Stomach (tissue), 19 donors: ENCODE measurements at regions of chr11 and their contacts with region 1.

Region 1: GRCh38 chr11:69874984-69875624 is 55.9 kb upstream of the FGF3 start:
- DNase-seq: no peak
- H3K4me3 ChIP-seq: no peak overlapping the region
- H3K27ac ChIP-seq: no peak overlapping the region
- H3K4me1 ChIP-seq: no peaks in the 10 kb centered on the region
- H3K27me3 ChIP-seq: peaks cover 0 to 41% (median 0%) of the 10 kb centered on the region in 3 donors
- CTCF ChIP-seq: no peak
- EP300 ChIP-seq: no peak
- POLR2A ChIP-seq: no peak

Region 2: GRCh38 chr11:69721745-69722144 is 153.4 kb before region 1 on chr11:
- intact Hi-C with region 1: loop called (anchors 10 kb)
- DNase-seq: no peak
- H3K4me3 ChIP-seq: no peak overlapping the region
- H3K27ac ChIP-seq: no peak overlapping the region
- H3K4me1 ChIP-seq: peaks cover 0 to 5% (median 0%) of the 10 kb centered on the region in 4 donors
- H3K27me3 ChIP-seq: peaks cover 10 to 90% (median 41%) of the 10 kb centered on the region in 3 donors
- CTCF ChIP-seq: no peak
- EP300 ChIP-seq: no peak
- POLR2A ChIP-seq: no peak

Region 3: DNA sequence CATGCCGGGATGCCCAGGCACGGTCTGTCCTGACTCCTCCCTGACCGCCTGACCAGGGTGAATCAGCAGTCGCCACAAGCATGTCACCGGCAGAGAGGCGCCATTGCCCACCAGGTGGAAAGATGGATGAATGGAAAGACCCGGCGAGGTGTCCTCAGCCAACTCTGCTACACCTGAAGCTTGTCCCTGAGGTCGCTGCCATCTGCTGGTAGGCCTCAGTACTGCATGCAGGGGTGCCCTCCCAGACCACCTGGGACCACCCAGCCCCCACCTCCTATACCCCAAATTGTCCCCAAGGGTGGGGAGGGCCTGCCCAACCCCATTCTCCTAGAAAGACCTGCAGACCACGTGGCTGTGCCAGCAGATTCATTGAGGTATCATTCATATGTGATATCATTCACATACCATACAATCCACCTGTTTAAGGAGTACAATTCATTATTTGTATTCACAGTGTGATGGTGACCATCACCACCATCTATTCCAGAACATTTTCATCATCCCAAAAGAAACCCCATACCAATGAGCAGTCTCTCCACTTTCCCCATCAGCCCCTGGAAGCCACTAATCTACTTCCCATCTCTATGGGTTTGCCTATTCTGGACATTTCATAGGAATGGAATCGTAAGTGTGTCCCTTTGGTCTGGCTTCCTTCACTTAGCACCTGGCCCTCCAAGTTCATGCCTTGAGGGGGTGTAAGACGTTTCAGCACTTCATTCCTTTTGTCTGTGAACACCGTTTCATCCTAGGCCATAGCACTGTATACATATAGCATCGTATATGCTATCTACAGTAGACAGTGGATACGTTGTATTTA is 73.4 kb before region 1 on chr11:
- intact Hi-C with region 1: no loop called
- DNase-seq: peak; percentile 30 to 54
- H3K4me3 ChIP-seq: no peak overlapping the region
- H3K27ac ChIP-seq: no peak overlapping the region
- H3K4me1 ChIP-seq: no peaks in the 10 kb centered on the region
- H3K27me3 ChIP-seq: peaks cover 0 to 53% (median 0%) of the 10 kb centered on the region in 3 donors
- CTCF ChIP-seq: peak in 5 of 7 experiments; percentile 44 to 73 (median 49)
- EP300 ChIP-seq: no peak
- POLR2A ChIP-seq: no peak

Region 4: DNA sequence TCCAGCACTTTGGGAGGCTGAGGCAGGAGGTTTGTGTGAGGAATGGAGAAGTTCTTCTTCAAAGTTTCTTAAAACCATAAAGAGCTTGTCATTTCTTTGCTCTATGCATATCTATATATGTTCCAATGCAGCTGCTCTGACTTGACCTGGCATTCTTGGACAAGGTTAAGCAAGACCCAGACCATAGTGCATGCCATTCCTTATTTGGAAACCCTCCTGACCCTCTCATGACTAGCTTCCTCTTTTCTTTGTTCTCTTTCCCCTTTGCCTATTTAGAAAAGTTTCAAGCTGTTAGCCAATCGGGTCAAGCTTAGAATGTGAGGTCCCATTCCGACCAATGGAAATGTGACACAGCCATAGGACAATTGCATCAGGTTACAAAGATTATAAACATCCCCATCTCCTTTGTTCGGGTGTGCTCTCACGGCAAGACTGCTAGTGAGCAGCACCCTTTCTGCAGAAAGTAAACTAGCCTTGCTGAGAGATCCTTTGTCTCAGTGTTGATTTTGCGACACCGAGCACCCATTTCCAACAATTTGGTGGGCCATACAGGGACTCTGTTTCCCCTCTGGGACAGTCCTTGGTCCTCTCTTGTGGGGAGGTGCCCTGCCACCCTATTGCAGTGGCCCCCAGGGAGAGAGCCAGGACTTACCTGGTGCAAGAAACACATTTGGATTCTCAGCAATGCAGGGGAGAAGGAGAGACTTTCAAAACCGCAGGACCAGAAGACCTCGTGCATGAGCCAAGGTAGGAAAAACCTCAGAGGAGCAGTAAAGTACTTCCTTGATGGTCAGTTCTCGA is 163.1 kb after region 1 on chr11:
- intact Hi-C with region 1: no loop called
- DNase-seq: peak in 1 of 2 donors; percentile 2
- H3K4me3 ChIP-seq: no peak overlapping the region
- H3K27ac ChIP-seq: no peak overlapping the region
- H3K4me1 ChIP-seq: peaks cover 0 to 4% (median 0%) of the 10 kb centered on the region in 4 donors
- H3K27me3 ChIP-seq: peaks cover 0 to 21% (median 0%) of the 10 kb centered on the region in 3 donors
- CTCF ChIP-seq: no peak
- EP300 ChIP-seq: no peak
- POLR2A ChIP-seq: no peak

Region 5: GRCh38 chr11:70128435-70128906 is 253.4 kb after region 1 on chr11:
- intact Hi-C with region 1: no loop called
- DNase-seq: peak; percentile 40 to 74
- H3K4me3 ChIP-seq: no peak overlapping the region
- H3K27ac ChIP-seq: peak overlapping the region in 3 of 5 donors; percentile 9 to 42 (median 38)
- H3K4me1 ChIP-seq: peaks cover 6 to 16% (median 13%) of the 10 kb centered on the region in 4 donors
- H3K27me3 ChIP-seq: no peaks in the 10 kb centered on the region
- CTCF ChIP-seq: no peak
- EP300 ChIP-seq: no peak
- POLR2A ChIP-seq: no peak